CD4-positive, alpha-beta memory T cell (primary cell): ENCODE measurements at regions of chr17 and their contacts with region 1.

Region 1: GRCh38 chr17:67376737-67377487 is at the start of gene PITPNC1:
- DNase-seq: peak; percentile 86 to 91 (median 87)
- H3K4me3 ChIP-seq: peak within 1 kb of the TSS; percentile 81 to 83
- H3K4me3 Mint-ChIP-seq: peak within 1 kb of the TSS; percentile 89 to 98 (median 92)
- H3K27ac ChIP-seq: peak within 1 kb of the TSS; percentile 78
- H3K27ac Mint-ChIP-seq: peak within 1 kb of the TSS; percentile 86 to 94 (median 92)
- H3K4me1 ChIP-seq: peaks cover 50% of the 10 kb centered on the region
- H3K4me1 Mint-ChIP-seq: peaks cover 29 to 51% (median 36%) of the 10 kb centered on the region in 4 donors
- H3K27me3 ChIP-seq: no peaks in the 10 kb centered on the region
- H3K27me3 Mint-ChIP-seq: no peaks in the 10 kb centered on the region
- total RNA-seq, gene PITPNC1: 68.4 to 71.2 TPM

Region 2: DNA sequence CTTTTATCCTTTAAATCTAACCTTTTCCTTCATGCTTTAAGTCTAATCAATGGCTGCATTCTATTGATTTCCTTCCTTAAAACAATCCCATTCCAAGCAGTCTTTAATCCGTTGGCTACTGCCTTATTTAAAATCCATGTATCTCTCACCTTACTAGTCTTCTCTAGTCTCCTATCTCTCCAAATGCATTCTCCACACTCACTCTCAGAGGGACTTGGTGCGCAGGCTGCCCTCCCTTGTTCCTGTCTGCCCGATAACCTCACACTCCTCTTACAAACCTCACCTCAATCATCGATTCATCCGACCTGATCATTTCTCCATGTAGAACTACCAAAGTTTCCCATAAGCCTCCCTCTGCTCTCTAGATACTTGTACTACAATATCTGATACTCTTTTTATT is 33.7 kb before region 1 on chr17:
- CTCF ChIA-PET with region 1: no interaction called
- POLR2A ChIA-PET with region 1: no interaction called
- intact Hi-C with region 1: no loop called
- DNase-seq: no peak
- H3K4me3 ChIP-seq: no peak overlapping the region
- H3K4me3 Mint-ChIP-seq: no peak overlapping the region
- H3K27ac ChIP-seq: no peak overlapping the region
- H3K27ac Mint-ChIP-seq: peak overlapping the region in 2 of 7 donors; percentile 6 to 73
- H3K4me1 ChIP-seq: no peaks in the 10 kb centered on the region
- H3K4me1 Mint-ChIP-seq: peaks cover 0 to 4% (median 0%) of the 10 kb centered on the region in 4 donors
- H3K27me3 ChIP-seq: no peaks in the 10 kb centered on the region
- H3K27me3 Mint-ChIP-seq: no peaks in the 10 kb centered on the region

Region 3: DNA sequence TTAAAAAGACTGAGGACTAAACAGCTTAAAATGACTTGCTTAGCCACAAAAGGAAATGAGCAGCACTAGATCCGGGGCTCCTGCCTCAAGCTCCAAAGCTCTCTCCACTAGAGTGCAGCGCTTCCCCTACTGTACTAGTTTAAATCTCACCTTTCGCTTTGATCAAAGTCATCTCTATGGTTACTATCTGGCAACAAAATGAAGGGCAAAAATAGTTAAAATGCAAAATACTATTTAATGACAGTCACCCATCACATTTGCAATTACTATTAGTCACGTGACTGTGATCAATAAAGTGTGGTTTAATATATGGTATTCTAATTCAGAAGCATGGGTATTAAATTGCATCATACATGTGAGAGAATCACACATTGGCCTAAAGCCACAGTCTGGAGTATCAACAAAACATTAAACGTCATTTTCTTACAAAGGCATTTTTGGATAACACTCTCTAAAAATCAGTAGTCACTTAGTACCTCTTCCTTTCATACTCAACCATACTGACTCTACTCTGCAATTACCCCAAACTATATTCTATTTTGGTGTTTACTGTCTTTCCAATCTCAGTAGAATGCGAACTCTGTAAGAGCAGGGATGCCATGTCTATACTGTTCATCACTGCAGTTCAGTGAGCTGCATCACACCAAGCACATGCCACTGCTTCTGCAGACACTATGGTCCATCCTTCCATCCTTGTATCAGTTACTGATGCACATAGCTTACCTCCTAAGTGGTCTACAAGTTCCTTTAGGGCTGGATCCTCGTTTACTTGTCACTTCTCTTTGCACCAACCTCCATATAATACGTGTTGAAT is 16.7 kb before region 1 on chr17:
- CTCF ChIA-PET with region 1: interaction called, 126 read pairs
- POLR2A ChIA-PET with region 1: interaction called, 49 read pairs
- intact Hi-C with region 1: no loop called
- DNase-seq: peak; percentile 66 to 86 (median 74)
- H3K4me3 ChIP-seq: no peak overlapping the region
- H3K4me3 Mint-ChIP-seq: peak overlapping the region; percentile 22 to 72 (median 55)
- H3K27ac ChIP-seq: peak overlapping the region; percentile 48
- H3K27ac Mint-ChIP-seq: peak overlapping the region; percentile 79 to 93 (median 90)
- H3K4me1 ChIP-seq: peaks cover 75% of the 10 kb centered on the region
- H3K4me1 Mint-ChIP-seq: peaks cover 47 to 80% (median 61%) of the 10 kb centered on the region in 4 donors
- H3K27me3 ChIP-seq: no peaks in the 10 kb centered on the region
- H3K27me3 Mint-ChIP-seq: no peaks in the 10 kb centered on the region

Region 4: DNA sequence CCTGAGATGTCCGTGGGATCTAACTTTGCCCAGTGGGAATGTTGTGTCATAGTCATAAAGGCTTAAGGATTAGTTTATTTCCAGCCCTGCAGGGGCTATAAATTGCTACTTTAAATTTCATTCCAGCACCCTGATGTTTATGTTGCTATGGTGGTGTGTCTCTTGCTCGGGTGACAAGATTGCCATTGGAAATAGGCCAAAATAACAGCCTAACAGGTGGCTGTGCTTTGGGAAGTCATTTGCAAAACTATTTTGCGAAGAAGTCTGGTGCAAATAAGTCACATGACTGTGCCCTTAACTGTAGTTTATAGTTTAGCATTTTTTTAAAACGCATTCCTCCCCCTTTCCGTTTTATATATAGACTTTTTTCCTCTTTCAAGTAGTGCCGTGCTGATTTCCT is 23.3 kb after region 1 on chr17:
- CTCF ChIA-PET with region 1: interaction called, 7 read pairs
- POLR2A ChIA-PET with region 1: interaction called, 10 read pairs
- intact Hi-C with region 1: no loop called
- DNase-seq: peak; percentile 30 to 52 (median 43)
- H3K4me3 ChIP-seq: no peak overlapping the region
- H3K4me3 Mint-ChIP-seq: peak overlapping the region in 7 of 8 donors; percentile 46 to 87 (median 71)
- H3K27ac ChIP-seq: no peak overlapping the region
- H3K27ac Mint-ChIP-seq: peak overlapping the region; percentile 47 to 96 (median 88)
- H3K4me1 ChIP-seq: peaks cover 61% of the 10 kb centered on the region
- H3K4me1 Mint-ChIP-seq: peaks cover 41 to 81% (median 55%) of the 10 kb centered on the region in 4 donors
- H3K27me3 ChIP-seq: no peaks in the 10 kb centered on the region
- H3K27me3 Mint-ChIP-seq: no peaks in the 10 kb centered on the region

Region 5: GRCh38 chr17:67441052-67441927 is 64.4 kb after region 1 on chr17:
- CTCF ChIA-PET with region 1: interaction called, 40 read pairs
- POLR2A ChIA-PET with region 1: interaction called, 115 read pairs
- intact Hi-C with region 1: loop called (anchors 1 kb)
- DNase-seq: peak; percentile 80 to 97 (median 86)
- H3K4me3 ChIP-seq: peak overlapping the region; percentile 4 to 48
- H3K4me3 Mint-ChIP-seq: peak overlapping the region; percentile 79 to 90 (median 86)
- H3K27ac ChIP-seq: peak overlapping the region; percentile 77
- H3K27ac Mint-ChIP-seq: peak overlapping the region; percentile 87 to 99 (median 98)
- H3K4me1 ChIP-seq: peaks cover 91% of the 10 kb centered on the region
- H3K4me1 Mint-ChIP-seq: peaks cover 48 to 92% (median 72%) of the 10 kb centered on the region in 4 donors
- H3K27me3 ChIP-seq: no peaks in the 10 kb centered on the region
- H3K27me3 Mint-ChIP-seq: no peaks in the 10 kb centered on the region

Region 6: DNA sequence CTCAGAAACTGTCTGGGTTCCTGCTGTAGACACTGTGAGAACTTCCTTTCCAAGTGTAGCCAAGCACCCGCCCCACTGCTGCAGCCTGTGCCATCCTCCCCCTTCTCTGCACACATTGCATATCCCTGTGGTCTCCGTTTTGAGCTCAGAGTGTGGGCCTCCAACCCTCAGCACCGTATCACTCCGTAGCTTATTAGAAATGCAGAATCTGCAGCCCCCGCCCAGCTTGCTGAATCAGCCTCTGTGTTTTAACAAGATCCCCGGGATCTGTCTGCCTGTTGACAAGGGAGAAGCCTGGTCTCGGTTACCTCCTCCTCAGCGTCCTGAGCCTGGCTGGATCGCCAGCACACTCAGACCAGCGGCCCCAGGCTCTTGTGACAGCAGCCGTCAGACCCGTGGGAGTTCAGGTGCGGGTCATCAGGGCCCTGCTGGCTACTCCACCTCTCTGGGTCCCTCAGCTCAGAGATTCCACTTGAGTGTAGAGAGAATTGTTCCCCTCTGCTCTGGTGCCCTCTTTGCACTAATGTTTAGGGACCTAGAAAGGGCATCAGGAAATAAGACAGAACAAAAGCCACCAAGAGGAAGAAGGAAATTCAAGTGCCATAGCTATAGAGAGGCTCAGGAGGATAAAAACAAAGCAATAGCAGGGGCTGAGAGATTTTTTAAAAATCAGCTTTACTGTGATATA is 92.4 kb after region 1 on chr17:
- CTCF ChIA-PET with region 1: interaction called, 605 read pairs
- POLR2A ChIA-PET with region 1: interaction called, 258 read pairs
- intact Hi-C with region 1: no loop called
- DNase-seq: peak in 2 of 5 donors; percentile 26 to 52
- H3K4me3 ChIP-seq: peak overlapping the region; percentile 23 to 30
- H3K4me3 Mint-ChIP-seq: peak overlapping the region; percentile 75 to 85 (median 79)
- H3K27ac ChIP-seq: peak overlapping the region; percentile 29
- H3K27ac Mint-ChIP-seq: peak overlapping the region; percentile 81 to 91 (median 90)
- H3K4me1 ChIP-seq: peaks cover 65% of the 10 kb centered on the region
- H3K4me1 Mint-ChIP-seq: peaks cover 49 to 81% (median 62%) of the 10 kb centered on the region in 4 donors
- H3K27me3 ChIP-seq: no peaks in the 10 kb centered on the region
- H3K27me3 Mint-ChIP-seq: no peaks in the 10 kb centered on the region

Region 7: GRCh38 chr17:67503184-67503583 is 126.3 kb after region 1 on chr17:
- CTCF ChIA-PET with region 1: no interaction called
- POLR2A ChIA-PET with region 1: no interaction called
- intact Hi-C with region 1: no loop called
- DNase-seq: no peak
- H3K4me3 ChIP-seq: no peak overlapping the region
- H3K4me3 Mint-ChIP-seq: peak overlapping the region in 3 of 8 donors; percentile 7 to 55 (median 41)
- H3K27ac ChIP-seq: no peak overlapping the region
- H3K27ac Mint-ChIP-seq: peak overlapping the region in 2 of 7 donors; percentile 43 to 58
- H3K4me1 ChIP-seq: peaks cover 22% of the 10 kb centered on the region
- H3K4me1 Mint-ChIP-seq: peaks cover 45 to 79% (median 61%) of the 10 kb centered on the region in 4 donors
- H3K27me3 ChIP-seq: no peaks in the 10 kb centered on the region
- H3K27me3 Mint-ChIP-seq: no peaks in the 10 kb centered on the region

Region 8: GRCh38 chr17:67602956-67603355 is 226.0 kb after region 1 on chr17:
- CTCF ChIA-PET with region 1: interaction called, 29 read pairs
- POLR2A ChIA-PET with region 1: interaction called, 3 read pairs
- intact Hi-C with region 1: loop called (anchors 1 kb)
- DNase-seq: peak; percentile 41 to 55 (median 47)
- H3K4me3 ChIP-seq: no peak overlapping the region
- H3K4me3 Mint-ChIP-seq: no peak overlapping the region
- H3K27ac ChIP-seq: no peak overlapping the region
- H3K27ac Mint-ChIP-seq: peak overlapping the region in 4 of 7 donors; percentile 26 to 86 (median 66)
- H3K4me1 ChIP-seq: no peaks in the 10 kb centered on the region
- H3K4me1 Mint-ChIP-seq: peaks cover 11 to 17% (median 16%) of the 10 kb centered on the region in 4 donors
- H3K27me3 ChIP-seq: no peaks in the 10 kb centered on the region
- H3K27me3 Mint-ChIP-seq: no peaks in the 10 kb centered on the region

Region 9: GRCh38 chr17:67717624-67718329 is 340.9 kb after region 1 on chr17 and contains the start of gene NOL11:
- CTCF ChIA-PET with region 1: interaction called, 6 read pairs
- POLR2A ChIA-PET with region 1: interaction called, 20 read pairs
- intact Hi-C with region 1: loop called (anchors 1 kb)
- DNase-seq: peak; percentile 99 to 100 (median 99)
- H3K4me3 ChIP-seq: peak within 1 kb of the TSS; percentile 89 to 100
- H3K4me3 Mint-ChIP-seq: peak within 1 kb of the TSS; percentile 98 to 100 (median 100)
- H3K27ac ChIP-seq: peak within 1 kb of the TSS; percentile 94
- H3K27ac Mint-ChIP-seq: peak within 1 kb of the TSS; percentile 97 to 100 (median 99)
- H3K4me1 ChIP-seq: peaks cover 28% of the 10 kb centered on the region
- H3K4me1 Mint-ChIP-seq: peaks cover 10 to 33% (median 19%) of the 10 kb centered on the region in 4 donors
- H3K27me3 ChIP-seq: no peaks in the 10 kb centered on the region
- H3K27me3 Mint-ChIP-seq: peaks cover 0 to 2% of the 10 kb centered on the region in 2 donors
- total RNA-seq, gene NOL11: 56.6 to 57.1 TPM